ENCODE measurements at regions of chr10 and their contacts with region 1.

Region 1: GRCh38 chr10:95374597-95375209 is 83.9 kb upstream of the PDLIM1 start:
- DNase-seq: peak; percentile 75 to 82
- ATAC-seq: peak; percentile 89 to 96 (median 94)
- H3K4me3 ChIP-seq: no peak overlapping the region
- H3K27ac ChIP-seq: no peak overlapping the region
- H3K4me1 ChIP-seq: no peaks in the 10 kb centered on the region
- H3K27me3 ChIP-seq: no peaks in the 10 kb centered on the region
- CTCF ChIP-seq: peak; percentile 96

Region 2: DNA sequence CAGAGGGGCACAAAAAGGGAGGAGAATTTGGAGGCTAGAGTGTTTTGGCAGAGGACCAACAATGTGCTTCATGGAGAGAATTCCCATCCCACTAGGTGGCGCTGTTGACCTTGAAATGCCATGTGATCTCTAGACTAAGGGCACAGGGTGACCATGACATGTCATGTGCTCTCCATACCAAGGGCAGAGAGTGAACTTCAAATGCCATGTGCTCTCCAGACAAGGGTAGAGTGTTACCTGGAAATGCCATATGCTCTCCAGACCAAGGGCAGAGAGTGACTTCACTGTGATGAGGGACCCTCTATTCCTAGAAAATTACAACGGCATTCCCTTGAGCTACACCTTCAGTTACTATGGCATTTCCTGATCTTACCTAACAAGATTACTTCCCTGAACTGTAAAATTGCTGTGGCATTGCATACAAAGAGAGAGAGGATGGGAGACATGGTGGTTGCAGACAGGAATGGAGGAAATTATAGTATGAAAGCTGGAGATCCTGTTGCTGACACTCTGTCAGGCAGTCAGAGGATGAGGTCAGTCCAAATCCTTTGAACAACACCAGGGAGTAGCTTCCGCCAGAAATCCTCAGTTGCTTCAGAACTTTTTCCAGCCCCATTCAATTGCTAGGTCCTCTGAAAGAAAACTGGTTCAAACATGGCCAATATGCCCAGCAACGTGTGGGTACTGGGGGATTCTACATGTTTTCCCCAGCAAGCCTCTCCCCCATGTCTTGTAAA is 241.5 kb before region 1 on chr10:
- intact Hi-C with region 1: loop called in 1 of 2 experiments (anchors 5 kb)
- DNase-seq: peak; percentile 30 to 46
- ATAC-seq: peak in 3 of 4 donors; percentile 42 to 60 (median 58)
- H3K4me3 ChIP-seq: no peak overlapping the region
- H3K27ac ChIP-seq: no peak overlapping the region
- H3K4me1 ChIP-seq: no peaks in the 10 kb centered on the region
- H3K27me3 ChIP-seq: peaks cover 0 to 2% (median 0%) of the 10 kb centered on the region in 3 donors
- CTCF ChIP-seq: peak; percentile 63

Region 3: GRCh38 chr10:95430231-95430951 is 55.7 kb after region 1 on chr10:
- intact Hi-C with region 1: loop called in 1 of 2 experiments (anchors 5 kb)
- DNase-seq: no peak
- ATAC-seq: peak; percentile 88 to 91 (median 88)
- H3K4me3 ChIP-seq: no peak overlapping the region
- H3K27ac ChIP-seq: peak overlapping the region; percentile 25
- H3K4me1 ChIP-seq: peaks cover 42% of the 10 kb centered on the region
- H3K27me3 ChIP-seq: no peaks in the 10 kb centered on the region
- CTCF ChIP-seq: peak; percentile 99

Region 4: DNA sequence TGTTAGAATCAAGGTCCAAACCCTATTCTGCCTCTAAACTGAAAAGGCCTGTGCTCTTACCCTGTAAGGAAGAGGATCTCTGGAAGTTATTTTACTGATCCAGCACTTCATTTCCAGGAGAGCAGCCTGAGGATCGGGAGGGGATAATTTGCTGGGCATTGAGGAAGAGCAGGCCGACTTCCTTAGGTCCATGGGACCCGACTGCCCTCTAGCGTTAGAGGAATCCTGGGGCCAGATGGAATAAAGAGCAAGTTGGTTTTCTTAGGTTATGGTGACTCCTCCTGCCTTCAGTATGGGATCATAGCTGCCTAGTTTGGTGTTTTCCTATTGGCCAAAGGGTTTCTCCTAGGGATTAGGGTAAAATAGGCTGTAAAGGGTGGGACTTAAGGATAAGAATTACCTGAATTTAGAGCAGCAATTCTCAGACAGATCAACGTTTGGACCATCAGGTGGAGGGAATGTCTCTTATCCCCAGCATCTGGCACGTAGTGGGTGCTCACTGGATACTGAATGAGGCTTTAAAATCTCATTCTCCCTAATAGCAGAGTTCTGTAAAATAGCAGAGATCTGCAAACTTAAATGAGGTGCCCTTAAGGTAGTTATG is 226.5 kb after region 1 on chr10:
- intact Hi-C with region 1: loop called (anchors 1 to 2 kb)
- DNase-seq: peak; percentile 75 to 85
- ATAC-seq: peak; percentile 95 to 98 (median 96)
- H3K4me3 ChIP-seq: no peak overlapping the region
- H3K27ac ChIP-seq: no peak overlapping the region
- H3K4me1 ChIP-seq: peaks cover 8% of the 10 kb centered on the region
- H3K27me3 ChIP-seq: no peaks in the 10 kb centered on the region
- CTCF ChIP-seq: peak; percentile 92